ENCODE measurements at regions of chr17 and their contacts with region 1.

Region 1: DNA sequence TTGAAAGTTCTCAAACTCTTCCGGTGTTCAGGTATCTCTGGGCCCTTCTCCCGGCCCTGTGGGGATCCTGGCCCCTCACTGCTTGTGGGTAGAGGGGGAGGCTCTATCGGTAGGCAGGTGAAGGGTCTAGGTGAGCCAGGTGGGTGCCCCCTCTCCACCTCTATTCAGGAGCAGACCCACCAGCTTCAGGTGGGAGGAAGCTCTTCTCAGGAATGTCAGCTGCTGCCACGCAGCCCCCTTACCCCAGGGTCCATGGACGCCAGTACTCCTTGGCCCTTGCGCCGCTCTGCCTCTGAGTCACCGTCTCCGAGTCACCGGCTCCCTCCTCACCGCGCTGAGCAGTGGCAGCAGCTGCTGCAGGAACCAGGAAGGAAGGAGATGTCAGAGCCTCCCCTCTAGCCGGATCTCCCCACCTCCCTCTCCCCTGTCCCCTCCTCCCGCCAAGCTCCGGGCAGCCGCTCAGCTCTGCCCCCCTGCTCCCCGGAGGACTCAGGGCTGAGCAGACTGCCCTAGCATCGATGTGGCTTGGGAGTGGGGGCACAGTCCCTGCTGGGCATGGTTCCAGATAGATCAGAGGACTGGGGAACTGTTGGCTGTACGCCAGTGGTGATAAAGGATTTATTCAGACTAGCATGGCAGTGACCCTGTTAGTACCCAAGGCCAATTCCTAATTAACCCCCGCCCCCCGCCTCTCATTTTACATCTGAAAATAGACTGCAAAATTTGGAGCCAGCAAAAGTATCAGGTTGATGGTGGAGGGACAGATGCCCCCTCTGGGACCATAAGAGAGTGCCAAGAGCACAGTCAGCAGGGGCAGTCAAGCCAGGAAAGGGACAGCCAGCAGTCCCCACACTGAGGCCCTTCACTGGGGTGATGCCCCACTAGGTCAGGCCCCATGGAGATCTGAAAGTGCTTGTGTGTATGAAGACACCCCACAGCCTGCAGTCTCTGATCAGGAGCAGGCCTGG is at the start of gene OSBPL7:
- DNase-seq: peak; percentile 50 to 84 (median 66)
- ATAC-seq: peak; percentile 98 to 99
- H3K4me3 Mint-ChIP-seq: peak within 1 kb of the TSS; percentile 92 to 99 (median 98)
- H3K27ac Mint-ChIP-seq: peak within 1 kb of the TSS; percentile 88 to 96 (median 94)
- H3K4me1 Mint-ChIP-seq: peaks cover 12 to 30% (median 26%) of the 10 kb centered on the region in 4 donors
- H3K27me3 Mint-ChIP-seq: no peaks in the 10 kb centered on the region
- polyA plus RNA-seq, gene OSBPL7: 3.6 to 6.8 (median 4.4) TPM

Region 2: GRCh38 chr17:47720754-47721533 is 100.8 kb before region 1 on chr17:
- POLR2A ChIA-PET with region 1: no interaction called
- DNase-seq: peak in 6 of 10 donors; percentile 15 to 76 (median 37)
- ATAC-seq: peak; percentile 65 to 88
- H3K4me3 Mint-ChIP-seq: peak overlapping the region in 8 of 10 donors; percentile 44 to 75 (median 62)
- H3K27ac Mint-ChIP-seq: peak overlapping the region in 3 of 10 donors; percentile 34 to 89 (median 79)
- H3K4me1 Mint-ChIP-seq: peaks cover 20 to 71% (median 52%) of the 10 kb centered on the region in 4 donors
- H3K27me3 Mint-ChIP-seq: peaks cover 4 to 18% (median 10%) of the 10 kb centered on the region in 5 donors

Region 3: GRCh38 chr17:47763913-47764582 is 57.7 kb before region 1 on chr17:
- POLR2A ChIA-PET with region 1: no interaction called
- DNase-seq: no peak
- ATAC-seq: no peak
- H3K4me3 Mint-ChIP-seq: no peak overlapping the region
- H3K27ac Mint-ChIP-seq: peak overlapping the region in 2 of 10 donors; percentile 15 to 19
- H3K4me1 Mint-ChIP-seq: peaks cover 3 to 15% (median 7%) of the 10 kb centered on the region in 4 donors
- H3K27me3 Mint-ChIP-seq: peaks cover 4 to 26% (median 12%) of the 10 kb centered on the region in 5 donors

Region 4: GRCh38 chr17:47776330-47777197 is 45.1 kb before region 1 on chr17:
- POLR2A ChIA-PET with region 1: no interaction called
- DNase-seq: peak in 7 of 10 donors; percentile 15 to 58 (median 36)
- ATAC-seq: peak; percentile 77 to 83
- H3K4me3 Mint-ChIP-seq: no peak overlapping the region
- H3K27ac Mint-ChIP-seq: peak overlapping the region in 1 of 10 donors; percentile 34
- H3K4me1 Mint-ChIP-seq: peaks cover 0 to 2% (median under 1%) of the 10 kb centered on the region in 4 donors
- H3K27me3 Mint-ChIP-seq: peaks cover 24 to 61% (median 40%) of the 10 kb centered on the region in 5 donors

Region 5: GRCh38 chr17:47840740-47841603 is 19.3 kb after region 1 on chr17 and contains the start of gene SCRN2:
- POLR2A ChIA-PET with region 1: interaction called, 10 read pairs
- DNase-seq: peak; percentile 71 to 94 (median 82)
- ATAC-seq: peak; percentile 85 to 91
- H3K4me3 Mint-ChIP-seq: peak within 1 kb of the TSS; percentile 84 to 99 (median 94)
- H3K27ac Mint-ChIP-seq: peak within 1 kb of the TSS; percentile 67 to 95 (median 82)
- H3K4me1 Mint-ChIP-seq: peaks cover 15 to 39% (median 23%) of the 10 kb centered on the region in 4 donors
- H3K27me3 Mint-ChIP-seq: peaks cover 2 to 22% (median 14%) of the 10 kb centered on the region in 5 donors
- polyA plus RNA-seq, gene SCRN2: 19.3 to 37.9 (median 21.6) TPM